ENCODE measurements at regions of chr19 and their contacts with region 1.

Region 1: DNA sequence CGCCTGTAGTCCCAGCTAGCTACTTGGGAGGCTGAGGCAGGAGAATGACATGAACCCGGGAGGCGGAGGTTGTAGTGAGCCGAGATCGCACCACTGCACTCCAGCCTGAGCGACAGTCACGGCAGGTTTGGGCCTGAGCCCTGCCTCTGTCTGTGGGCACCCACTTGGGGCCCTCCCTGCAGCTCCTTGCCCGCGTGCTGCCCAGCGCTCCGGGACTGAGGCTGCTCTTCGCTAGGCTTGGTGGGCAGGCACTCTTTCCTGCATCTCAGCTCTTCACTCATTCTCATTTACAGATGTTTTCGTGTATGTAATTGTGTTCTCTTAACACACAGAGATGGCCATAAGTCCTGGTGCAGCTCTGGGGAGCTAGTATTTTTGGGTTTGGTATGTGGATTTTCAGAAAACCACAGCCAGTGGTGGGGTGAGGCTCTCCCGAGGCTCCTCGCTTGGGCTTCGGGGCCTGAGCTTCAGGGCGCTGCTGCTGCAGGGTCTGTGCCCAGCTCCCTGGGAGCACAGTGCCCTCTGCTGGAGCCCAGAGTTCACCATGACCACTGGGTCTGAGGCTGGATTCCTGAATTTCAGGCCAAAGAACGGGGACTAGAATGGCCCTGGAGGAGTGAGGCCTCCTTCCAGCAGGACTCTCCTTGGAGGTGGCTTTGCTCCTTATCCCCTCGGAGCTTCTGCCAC is 15.2 kb downstream of the UPF1 start:
- DNase-seq: peak; percentile 70
- H3K4me3 ChIP-seq: no peak overlapping the region
- H3K27ac ChIP-seq: no peak overlapping the region
- H3K4me1 ChIP-seq: peaks cover 48% of the 10 kb centered on the region
- H3K27me3 ChIP-seq: no peaks in the 10 kb centered on the region
- CTCF ChIP-seq: peak; percentile 91 to 92
- POLR2A ChIP-seq: no peak

Region 2: GRCh38 chr19:18469069-18469846 is 377.7 kb before region 1 on chr19:
- CTCF ChIA-PET with region 1: interaction called, 25 read pairs
- POLR2A ChIA-PET with region 1: no interaction called
- dilution Hi-C with region 1: no loop called
- intact Hi-C with region 1: no loop called
- DNase-seq: peak; percentile 49
- H3K4me3 ChIP-seq: no peak overlapping the region
- H3K27ac ChIP-seq: no peak overlapping the region
- H3K4me1 ChIP-seq: no peaks in the 10 kb centered on the region
- H3K27me3 ChIP-seq: no peaks in the 10 kb centered on the region
- CTCF ChIP-seq: peak; percentile 86 to 89
- POLR2A ChIP-seq: no peak

Region 3: GRCh38 chr19:18594096-18594823 is 252.7 kb before region 1 on chr19:
- CTCF ChIA-PET with region 1: interaction called, 65 read pairs
- POLR2A ChIA-PET with region 1: no interaction called
- dilution Hi-C with region 1: no loop called
- intact Hi-C with region 1: loop called (anchors 1 kb)
- DNase-seq: peak; percentile 80
- H3K4me3 ChIP-seq: peak overlapping the region in 2 of 3 experiments; percentile 14 to 25
- H3K27ac ChIP-seq: no peak overlapping the region
- H3K4me1 ChIP-seq: peaks cover 12% of the 10 kb centered on the region
- H3K27me3 ChIP-seq: no peaks in the 10 kb centered on the region
- CTCF ChIP-seq: peak; percentile 71 to 90
- POLR2A ChIP-seq: no peak

Region 4: DNA sequence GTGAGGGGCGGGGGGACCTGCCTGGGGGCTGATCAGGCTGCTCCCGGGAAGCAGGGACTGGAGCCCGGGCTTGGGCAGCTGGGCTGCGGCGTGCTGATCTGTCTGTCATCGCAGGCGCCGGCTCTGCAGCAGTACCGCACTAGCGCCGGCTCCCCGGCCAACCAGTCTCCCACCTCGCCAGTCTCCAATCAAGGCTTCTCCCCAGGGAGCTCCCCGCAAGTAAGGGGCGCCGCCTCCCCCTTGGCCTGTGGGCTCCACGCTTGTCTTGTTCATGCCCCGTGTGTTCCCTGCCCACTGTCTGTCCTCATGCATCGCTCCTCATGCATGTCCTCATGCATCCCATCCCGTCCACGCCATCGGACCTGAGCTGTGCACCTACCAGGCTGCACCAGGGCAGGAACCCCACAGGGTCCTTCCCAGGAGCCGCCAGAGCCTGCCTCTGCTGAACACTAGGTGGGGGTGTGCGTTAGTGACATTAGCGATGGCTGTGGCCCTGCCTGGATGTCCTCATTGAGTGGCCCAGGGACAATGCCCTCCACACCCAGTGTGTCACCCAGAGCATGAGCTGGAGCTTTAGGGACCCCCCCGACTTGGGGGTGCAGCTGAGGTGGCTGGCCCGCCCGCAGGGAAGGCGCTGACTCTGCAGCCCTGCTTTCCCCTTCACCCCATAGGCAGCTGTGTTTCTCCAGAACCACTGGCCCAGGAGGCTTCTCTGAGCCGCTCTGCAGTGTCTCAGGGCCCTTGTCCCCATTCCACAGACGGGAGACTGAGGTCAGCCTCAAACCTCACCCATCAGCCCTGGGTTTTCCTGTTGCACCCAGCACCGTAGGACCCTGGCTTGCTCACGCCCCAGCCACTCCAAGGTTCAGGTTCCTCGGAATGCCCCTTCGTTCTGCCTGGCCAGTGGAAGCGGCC is 75.4 kb before region 1 on chr19:
- CTCF ChIA-PET with region 1: interaction called, 16 read pairs
- POLR2A ChIA-PET with region 1: no interaction called
- dilution Hi-C with region 1: no loop called
- intact Hi-C with region 1: loop called (anchors 5 kb)
- DNase-seq: no peak
- H3K4me3 ChIP-seq: no peak overlapping the region
- H3K27ac ChIP-seq: no peak overlapping the region
- H3K4me1 ChIP-seq: no peaks in the 10 kb centered on the region
- H3K27me3 ChIP-seq: no peaks in the 10 kb centered on the region
- CTCF ChIP-seq: peak; percentile 13 to 23
- POLR2A ChIP-seq: no peak

Region 5: DNA sequence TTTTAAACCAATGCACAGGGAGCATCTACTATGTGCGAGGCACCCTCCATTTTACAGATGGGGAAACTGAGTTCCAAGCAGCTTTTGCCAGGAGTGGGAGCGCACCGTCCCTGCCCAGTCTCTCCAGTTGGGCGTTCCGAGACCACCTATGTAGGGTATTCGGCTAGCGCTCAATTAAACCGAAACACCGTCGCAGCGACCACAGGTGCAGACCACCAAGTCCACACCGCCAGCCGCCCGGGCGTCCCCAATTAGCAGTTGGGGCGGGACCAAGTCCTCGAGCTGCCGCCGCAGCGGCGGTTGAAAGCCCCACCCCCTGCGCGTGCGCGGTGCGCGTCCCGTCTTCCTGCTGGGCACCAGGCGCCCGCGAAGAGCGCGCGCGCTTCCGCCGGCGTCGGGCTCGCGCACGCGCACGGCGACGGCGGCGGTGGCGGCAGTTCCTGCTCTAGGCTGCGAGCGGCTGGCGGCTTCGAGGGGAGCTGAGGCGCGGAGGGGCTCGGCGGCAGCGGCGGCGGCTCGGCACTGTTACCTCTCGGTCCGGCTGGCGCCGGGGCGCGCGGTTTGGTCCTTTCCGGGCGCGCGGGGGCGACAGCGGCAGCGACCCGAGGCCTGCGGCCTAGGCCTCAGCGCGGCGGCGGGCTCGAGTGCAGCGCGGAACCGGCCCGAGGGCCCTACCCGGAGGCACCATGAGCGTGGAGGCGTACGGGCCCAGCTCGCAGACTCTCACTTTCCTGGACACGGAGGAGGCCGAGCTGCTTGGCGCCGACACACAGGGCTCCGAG is 15.3 kb before region 1 on chr19 and contains the start of gene UPF1:
- CTCF ChIA-PET with region 1: interaction called, 79 read pairs
- POLR2A ChIA-PET with region 1: interaction called, 3 read pairs
- dilution Hi-C with region 1: no loop called
- intact Hi-C with region 1: no loop called
- DNase-seq: peak; percentile 91
- H3K4me3 ChIP-seq: peak within 1 kb of the TSS; percentile 63 to 92 (median 86)
- H3K27ac ChIP-seq: peak within 1 kb of the TSS; percentile 81
- H3K4me1 ChIP-seq: peaks cover 17% of the 10 kb centered on the region
- H3K27me3 ChIP-seq: peaks cover 0 to 2% of the 10 kb centered on the region in 2 experiments
- CTCF ChIP-seq: no peak
- POLR2A ChIP-seq: peak; percentile 85
- total RNA-seq, gene UPF1: 68.2 and 69.1 TPM in 2 replicates

Region 6: GRCh38 chr19:18895038-18895823 is 48.2 kb after region 1 on chr19:
- CTCF ChIA-PET with region 1: interaction called, 11 read pairs
- POLR2A ChIA-PET with region 1: no interaction called
- dilution Hi-C with region 1: no loop called
- intact Hi-C with region 1: no loop called
- DNase-seq: peak; percentile 42
- H3K4me3 ChIP-seq: peak overlapping the region; percentile 35 to 54 (median 41)
- H3K27ac ChIP-seq: no peak overlapping the region
- H3K4me1 ChIP-seq: no peaks in the 10 kb centered on the region
- H3K27me3 ChIP-seq: peaks cover 0 to 2% of the 10 kb centered on the region in 2 experiments
- CTCF ChIP-seq: peak; percentile 33 to 54
- POLR2A ChIP-seq: no peak